ENCODE measurements at regions of chr13 and their contacts with region 1.

Region 1: DNA sequence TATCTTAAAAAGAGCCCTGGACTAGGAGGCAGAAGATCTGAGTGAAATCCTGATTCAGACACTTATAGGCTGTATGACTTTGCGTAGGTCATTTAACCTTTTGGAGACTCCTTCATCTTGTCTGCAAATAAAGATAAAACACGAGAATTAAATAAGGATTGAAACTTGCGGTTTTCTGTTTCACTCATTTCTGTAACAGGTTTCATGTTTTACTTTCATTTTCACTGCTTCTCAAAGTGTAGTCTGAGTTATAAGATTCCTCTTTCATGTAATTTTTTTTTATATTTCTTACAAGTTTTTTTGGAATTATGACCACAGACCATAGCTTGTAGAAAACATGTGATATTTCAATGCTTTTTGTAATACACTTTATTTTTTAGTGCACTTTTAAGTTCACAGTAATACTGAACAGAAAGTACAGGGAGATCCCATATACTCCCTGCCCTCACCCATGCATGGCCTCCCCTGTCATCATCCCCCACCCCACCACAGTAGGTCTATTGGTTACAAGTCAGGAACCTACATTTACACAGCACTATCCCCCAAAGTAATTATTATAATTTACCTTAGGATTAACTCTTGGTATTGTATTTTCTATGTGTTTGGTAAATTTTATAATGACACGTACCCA is 174.6 kb downstream of the ITGBL1 start:
- DNase-seq: peak; percentile 57
- ATAC-seq: peak; percentile 91
- H3K4me3 ChIP-seq: peak overlapping the region; percentile 57; the same call in 1 of the 2 replicates
- H3K27ac ChIP-seq: peak overlapping the region; percentile 7; the same call in 1 of the 2 replicates
- H3K4me1 ChIP-seq: peaks cover 31% of the 10 kb centered on the region
- H3K27me3 ChIP-seq: no peaks in the 10 kb centered on the region
- CTCF ChIP-seq: no peak
- EP300 ChIP-seq: peak in 1 of 2 experiments; percentile 80; a peak in 3 of 4 replicates
- POLR2A ChIP-seq: no peak
- RAD21 ChIP-seq: no peak

Region 2: GRCh38 chr13:101594936-101595335 is 32.1 kb before region 1 on chr13:
- CTCF ChIA-PET with region 1: no interaction called
- POLR2A ChIA-PET with region 1: no interaction called
- RAD21 ChIA-PET with region 1: no interaction called
- SMC1A ChIA-PET with region 1: no interaction called
- in situ Hi-C with region 1: no loop called
- intact Hi-C with region 1: no loop called
- DNase-seq: no peak
- ATAC-seq: no peak; the same call in 1 of the 3 replicates
- H3K4me3 ChIP-seq: no peak overlapping the region
- H3K27ac ChIP-seq: no peak overlapping the region
- H3K4me1 ChIP-seq: no peaks in the 10 kb centered on the region
- H3K27me3 ChIP-seq: no peaks in the 10 kb centered on the region
- CTCF ChIP-seq: no peak
- EP300 ChIP-seq: no peak
- POLR2A ChIP-seq: no peak
- RAD21 ChIP-seq: no peak

Region 3: GRCh38 chr13:101706651-101707050 is 79.6 kb after region 1 on chr13:
- CTCF ChIA-PET with region 1: no interaction called
- POLR2A ChIA-PET with region 1: no interaction called
- RAD21 ChIA-PET with region 1: no interaction called
- SMC1A ChIA-PET with region 1: interaction called, 6 read pairs
- in situ Hi-C with region 1: no loop called
- intact Hi-C with region 1: loop called (anchors 5 kb)
- DNase-seq: no peak
- ATAC-seq: peak; percentile 42
- H3K4me3 ChIP-seq: no peak overlapping the region
- H3K27ac ChIP-seq: no peak overlapping the region
- H3K4me1 ChIP-seq: no peaks in the 10 kb centered on the region
- H3K27me3 ChIP-seq: no peaks in the 10 kb centered on the region
- CTCF ChIP-seq: no peak
- EP300 ChIP-seq: no peak
- POLR2A ChIP-seq: no peak
- RAD21 ChIP-seq: no peak

Region 4: GRCh38 chr13:101747039-101747438 is 120.0 kb after region 1 on chr13:
- CTCF ChIA-PET with region 1: no interaction called
- POLR2A ChIA-PET with region 1: no interaction called
- RAD21 ChIA-PET with region 1: no interaction called
- SMC1A ChIA-PET with region 1: interaction called, 6 read pairs
- in situ Hi-C with region 1: no loop called
- intact Hi-C with region 1: loop called (anchors 2 kb)
- DNase-seq: no peak
- ATAC-seq: peak; percentile 80
- H3K4me3 ChIP-seq: no peak overlapping the region
- H3K27ac ChIP-seq: no peak overlapping the region
- H3K4me1 ChIP-seq: no peaks in the 10 kb centered on the region
- H3K27me3 ChIP-seq: peaks cover 0 to 3% of the 10 kb centered on the region in 2 experiments; a peak in 1 of 4 replicates
- CTCF ChIP-seq: no peak
- EP300 ChIP-seq: no peak
- POLR2A ChIP-seq: no peak
- RAD21 ChIP-seq: no peak